IMR-90 (cell line): ENCODE measurements at regions of chr10 and their contacts with region 1.

Region 1: DNA sequence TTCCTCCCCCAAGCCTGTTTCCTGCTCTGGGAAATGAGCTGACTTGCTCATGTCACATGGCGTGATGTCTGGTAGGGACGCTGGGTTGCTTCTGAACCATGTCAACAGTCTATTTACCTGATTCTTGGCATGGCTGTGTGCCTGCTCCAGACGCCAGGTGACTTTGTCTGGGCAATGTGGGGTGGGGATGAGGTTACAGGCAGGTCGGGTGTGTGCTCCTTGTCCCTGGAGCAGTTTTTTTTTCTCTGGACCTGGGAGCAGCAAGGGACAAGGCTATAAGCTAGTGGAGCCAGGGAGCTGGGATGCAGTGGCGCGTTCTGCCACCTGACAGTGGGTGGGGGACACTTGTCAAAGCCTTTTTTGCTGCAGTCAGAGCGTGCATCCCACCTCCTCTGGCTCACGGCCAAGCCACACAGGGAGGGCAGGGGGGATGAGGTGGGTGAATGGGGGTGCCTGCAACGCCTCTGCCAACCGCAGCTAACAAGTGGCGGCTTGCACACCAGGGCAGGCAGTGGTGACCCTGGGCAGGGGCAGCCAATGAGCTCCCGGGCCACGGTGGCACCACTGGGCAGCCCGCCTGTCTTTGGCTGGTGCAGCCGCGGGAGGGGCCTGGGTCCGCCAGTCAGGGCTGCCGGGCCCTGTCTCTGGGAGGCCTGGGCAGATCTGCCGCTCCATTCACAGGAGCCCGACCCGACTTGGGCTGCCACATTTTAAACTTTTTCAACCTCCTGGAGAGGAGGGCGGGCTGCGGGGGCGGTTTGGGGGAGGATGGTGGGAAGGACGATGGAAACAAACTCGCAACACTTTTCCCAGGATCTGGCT is 22.9 kb downstream of the DNAJB12 start:
- DNase-seq: peak; percentile 31
- ATAC-seq: peak; percentile 52
- H3K4me3 ChIP-seq: no peak overlapping the region
- H3K27ac ChIP-seq: no peak overlapping the region
- H3K4me1 ChIP-seq: peaks cover 25% of the 10 kb centered on the region
- H3K27me3 ChIP-seq: no peaks in the 10 kb centered on the region
- CTCF ChIP-seq: no peak
- POLR2A ChIP-seq: no peak
- RAD21 ChIP-seq: no peak

Region 2: GRCh38 chr10:71899665-71900412 is 432.0 kb before region 1 on chr10:
- CTCF ChIA-PET with region 1: interaction called, 3 read pairs
- POLR2A ChIA-PET with region 1: no interaction called
- dilution Hi-C with region 1: no loop called
- in situ Hi-C with region 1: no loop called
- intact Hi-C with region 1: loop called (anchors 5 kb)
- DNase-seq: no peak
- ATAC-seq: no peak
- H3K4me3 ChIP-seq: no peak overlapping the region
- H3K27ac ChIP-seq: no peak overlapping the region
- H3K4me1 ChIP-seq: no peaks in the 10 kb centered on the region
- H3K27me3 ChIP-seq: peaks cover 4% of the 10 kb centered on the region; the same call in 1 of the 2 replicates
- CTCF ChIP-seq: no peak
- POLR2A ChIP-seq: no peak
- RAD21 ChIP-seq: no peak

Region 3: DNA sequence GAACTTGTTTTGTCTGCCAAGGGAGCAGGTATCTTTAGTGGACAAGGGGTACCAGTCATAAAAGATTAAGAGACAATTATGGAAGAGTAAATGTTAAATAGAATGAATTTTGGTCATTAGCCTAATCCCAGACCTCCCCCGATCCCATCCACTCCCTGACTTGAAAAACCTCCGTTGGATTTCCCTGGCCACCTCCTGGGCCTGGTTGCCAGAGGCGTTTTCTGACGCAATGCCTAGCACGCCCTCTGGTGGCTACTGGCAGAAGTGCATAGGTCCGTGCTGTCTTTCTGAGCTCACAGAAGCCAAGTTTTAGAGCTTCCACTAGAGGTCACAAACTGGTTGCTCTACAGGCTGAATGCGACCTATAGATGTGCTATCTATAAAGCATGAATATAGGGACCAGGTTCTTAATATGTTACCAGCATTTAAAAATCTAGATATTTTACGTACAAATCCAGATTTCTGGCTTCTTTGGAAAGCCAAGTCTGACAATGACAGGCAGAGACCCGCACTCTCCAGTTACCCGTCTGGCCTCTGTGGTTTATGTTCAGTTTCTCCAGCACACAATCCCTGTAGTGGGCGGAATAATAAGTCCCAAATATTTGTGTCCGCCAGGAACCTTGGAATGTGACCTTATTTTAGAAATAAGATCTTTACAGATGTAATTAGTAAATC is 283.2 kb before region 1 on chr10:
- CTCF ChIA-PET with region 1: interaction called, 8 read pairs
- POLR2A ChIA-PET with region 1: interaction called, 3 read pairs
- dilution Hi-C with region 1: no loop called
- in situ Hi-C with region 1: loop called (anchors 10 kb)
- intact Hi-C with region 1: loop called (anchors 1 kb)
- DNase-seq: peak; percentile 90
- ATAC-seq: peak; percentile 96
- H3K4me3 ChIP-seq: no peak overlapping the region
- H3K27ac ChIP-seq: no peak overlapping the region
- H3K4me1 ChIP-seq: peaks cover 1% of the 10 kb centered on the region; the same call in 1 of the 2 replicates
- H3K27me3 ChIP-seq: peaks cover 16% of the 10 kb centered on the region
- CTCF ChIP-seq: peak; percentile 100
- POLR2A ChIP-seq: 0 out of 2 replicates have a peak, but pooled peaks have one; percentile 31
- RAD21 ChIP-seq: peak; percentile 100

Region 4: DNA sequence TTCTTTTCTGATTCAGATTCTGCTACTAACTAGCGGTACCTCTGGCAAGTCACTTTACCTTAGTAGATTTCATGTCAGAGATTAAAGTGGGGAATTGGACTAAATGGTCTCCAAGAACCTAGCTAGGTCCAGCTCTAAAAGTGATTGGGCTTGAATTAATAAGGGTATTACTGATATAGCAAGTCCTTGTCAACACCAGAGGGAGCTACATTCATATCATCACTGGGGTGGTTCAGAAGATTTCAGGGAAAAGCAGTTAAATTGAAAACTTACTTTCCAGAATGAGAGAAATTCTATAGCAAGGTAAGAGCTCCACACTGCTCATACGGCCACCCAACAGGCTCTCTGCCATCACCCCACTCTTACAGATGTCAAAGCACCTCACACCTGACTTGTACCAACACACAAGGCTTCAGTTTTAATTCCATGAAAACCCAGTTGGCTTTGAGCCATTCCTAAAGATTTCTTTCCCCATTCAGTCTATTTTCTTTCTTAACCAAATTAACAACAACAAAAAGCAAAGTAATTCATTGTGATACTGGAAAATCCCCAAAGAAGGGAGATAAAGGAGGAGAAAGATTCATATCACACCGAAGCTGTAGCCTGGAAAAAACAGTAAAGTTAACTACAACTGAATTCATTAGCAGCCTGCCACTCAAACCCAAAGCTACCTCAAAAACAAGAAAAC is 205.5 kb before region 1 on chr10:
- CTCF ChIA-PET with region 1: interaction called, 4 read pairs
- POLR2A ChIA-PET with region 1: no interaction called
- dilution Hi-C with region 1: no loop called
- in situ Hi-C with region 1: loop called (anchors 10 kb)
- intact Hi-C with region 1: loop called (anchors 1 kb)
- DNase-seq: peak; percentile 75
- ATAC-seq: peak; percentile 56; the same call in 1 of the 2 replicates
- H3K4me3 ChIP-seq: no peak overlapping the region
- H3K27ac ChIP-seq: no peak overlapping the region
- H3K4me1 ChIP-seq: peaks cover 1% of the 10 kb centered on the region; the same call in 1 of the 2 replicates
- H3K27me3 ChIP-seq: no peaks in the 10 kb centered on the region
- CTCF ChIP-seq: peak; percentile 67
- POLR2A ChIP-seq: no peak
- RAD21 ChIP-seq: peak; percentile 62

Region 5: DNA sequence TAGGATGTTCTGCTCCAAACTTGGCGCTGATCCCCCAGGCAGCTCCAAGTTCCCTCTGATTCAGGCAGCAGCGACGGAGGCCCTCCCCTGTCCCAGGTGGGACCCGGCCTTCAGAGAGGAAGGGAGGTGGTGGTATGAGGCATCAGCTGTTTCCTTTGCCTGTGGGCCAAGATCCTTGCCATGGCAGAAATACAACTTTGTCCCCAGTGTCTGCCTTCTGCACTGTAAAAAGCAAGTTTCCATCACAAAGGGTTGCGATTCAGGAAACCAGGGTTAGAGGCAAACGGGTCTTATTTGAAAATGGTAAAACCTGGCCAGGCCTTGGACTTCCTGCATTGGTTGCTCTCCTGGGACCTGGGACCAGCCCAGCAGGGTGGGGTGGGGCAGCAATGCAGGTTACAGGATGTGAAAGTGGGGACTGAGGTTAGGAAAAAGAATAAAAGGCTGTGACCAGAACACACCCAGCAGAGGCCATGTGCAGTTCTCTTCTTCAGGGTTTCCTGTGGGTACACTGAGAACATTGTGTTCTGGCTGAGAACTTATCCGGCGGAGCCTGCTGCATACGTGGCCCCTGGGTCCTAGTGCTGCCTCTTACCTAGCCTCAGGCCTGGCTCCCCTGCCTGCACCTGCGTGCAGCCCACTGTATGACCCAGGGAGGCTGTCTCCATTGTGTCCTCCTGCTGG is 83.2 kb before region 1 on chr10:
- CTCF ChIA-PET with region 1: no interaction called
- POLR2A ChIA-PET with region 1: no interaction called
- dilution Hi-C with region 1: no loop called
- in situ Hi-C with region 1: loop called (anchors 10 kb)
- intact Hi-C with region 1: loop called (anchors 1 kb)
- DNase-seq: no peak
- ATAC-seq: no peak
- H3K4me3 ChIP-seq: no peak overlapping the region
- H3K27ac ChIP-seq: no peak overlapping the region
- H3K4me1 ChIP-seq: peaks cover 20% of the 10 kb centered on the region
- H3K27me3 ChIP-seq: no peaks in the 10 kb centered on the region
- CTCF ChIP-seq: no peak
- POLR2A ChIP-seq: no peak
- RAD21 ChIP-seq: no peak

Region 6: GRCh38 chr10:72375585-72375984 is 43.8 kb after region 1 on chr10:
- CTCF ChIA-PET with region 1: no interaction called
- POLR2A ChIA-PET with region 1: no interaction called
- dilution Hi-C with region 1: no loop called
- in situ Hi-C with region 1: no loop called
- intact Hi-C with region 1: no loop called
- DNase-seq: no peak
- ATAC-seq: peak; percentile 72
- H3K4me3 ChIP-seq: no peak overlapping the region
- H3K27ac ChIP-seq: no peak overlapping the region
- H3K4me1 ChIP-seq: no peaks in the 10 kb centered on the region
- H3K27me3 ChIP-seq: no peaks in the 10 kb centered on the region
- CTCF ChIP-seq: peak; percentile 15; the same call in 1 of the 2 replicates
- POLR2A ChIP-seq: no peak
- RAD21 ChIP-seq: peak; percentile 36